Left ventricle myocardium inferior (tissue), 1 donor: ENCODE measurements at regions of chr15 and their contacts with region 1.

Region 1: DNA sequence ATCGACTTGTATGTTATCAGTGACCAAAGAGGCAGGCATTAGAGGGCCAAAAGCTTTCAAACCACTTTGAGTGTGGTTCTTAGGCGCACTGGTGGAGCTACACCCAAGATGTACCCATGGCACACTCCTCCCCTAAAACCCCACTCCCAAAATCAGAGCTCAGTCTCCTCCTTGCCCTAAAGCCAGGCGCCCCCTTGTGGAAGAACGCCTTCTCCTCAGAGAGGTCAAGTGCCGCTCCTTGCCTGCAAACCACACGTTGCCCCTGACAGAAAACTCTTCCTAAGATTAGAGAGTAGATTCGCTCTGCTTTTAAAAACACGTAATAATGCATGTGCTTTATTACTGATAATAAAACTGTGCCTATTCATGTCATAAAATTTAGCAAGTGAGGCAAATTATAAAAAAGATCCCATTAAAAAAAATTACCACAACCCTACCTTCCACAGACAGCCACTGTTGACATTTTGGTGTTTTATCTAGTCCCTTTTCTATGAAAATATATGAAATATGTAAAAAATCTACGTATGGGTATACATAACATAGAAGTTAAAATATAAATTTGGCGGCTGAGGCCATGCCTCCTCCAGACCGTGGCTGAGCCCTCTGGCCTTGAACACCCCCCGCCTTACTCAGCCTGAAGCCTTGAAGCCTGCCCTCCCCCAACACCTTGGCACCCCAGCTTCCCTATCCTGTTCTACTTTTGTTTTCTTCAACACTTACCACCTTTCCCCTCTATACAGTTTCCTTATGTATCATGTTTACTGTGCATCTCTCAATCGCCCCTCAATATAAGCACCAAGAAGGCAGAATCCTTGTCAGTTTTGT is 33.5 kb downstream of the BCL2L10 start:
- DNase-seq: peak; percentile 81
- H3K4me3 ChIP-seq: no peak overlapping the region
- H3K27ac ChIP-seq: no peak overlapping the region
- H3K4me1 ChIP-seq: peaks cover 6% of the 10 kb centered on the region
- H3K27me3 ChIP-seq: no peaks in the 10 kb centered on the region
- CTCF ChIP-seq: peak; percentile 91

Region 2: GRCh38 chr15:51697163-51697562 is 381.9 kb before region 1 on chr15:
- intact Hi-C with region 1: no loop called
- DNase-seq: no peak
- H3K4me3 ChIP-seq: no peak overlapping the region
- H3K27ac ChIP-seq: no peak overlapping the region
- H3K4me1 ChIP-seq: no peaks in the 10 kb centered on the region
- H3K27me3 ChIP-seq: no peaks in the 10 kb centered on the region
- CTCF ChIP-seq: no peak

Region 3: GRCh38 chr15:51793521-51794305 is 285.4 kb before region 1 on chr15:
- intact Hi-C with region 1: no loop called
- DNase-seq: peak; percentile 44
- H3K4me3 ChIP-seq: no peak overlapping the region
- H3K27ac ChIP-seq: peak overlapping the region; percentile 47
- H3K4me1 ChIP-seq: peaks cover 19% of the 10 kb centered on the region
- H3K27me3 ChIP-seq: no peaks in the 10 kb centered on the region
- CTCF ChIP-seq: no peak

Region 4: DNA sequence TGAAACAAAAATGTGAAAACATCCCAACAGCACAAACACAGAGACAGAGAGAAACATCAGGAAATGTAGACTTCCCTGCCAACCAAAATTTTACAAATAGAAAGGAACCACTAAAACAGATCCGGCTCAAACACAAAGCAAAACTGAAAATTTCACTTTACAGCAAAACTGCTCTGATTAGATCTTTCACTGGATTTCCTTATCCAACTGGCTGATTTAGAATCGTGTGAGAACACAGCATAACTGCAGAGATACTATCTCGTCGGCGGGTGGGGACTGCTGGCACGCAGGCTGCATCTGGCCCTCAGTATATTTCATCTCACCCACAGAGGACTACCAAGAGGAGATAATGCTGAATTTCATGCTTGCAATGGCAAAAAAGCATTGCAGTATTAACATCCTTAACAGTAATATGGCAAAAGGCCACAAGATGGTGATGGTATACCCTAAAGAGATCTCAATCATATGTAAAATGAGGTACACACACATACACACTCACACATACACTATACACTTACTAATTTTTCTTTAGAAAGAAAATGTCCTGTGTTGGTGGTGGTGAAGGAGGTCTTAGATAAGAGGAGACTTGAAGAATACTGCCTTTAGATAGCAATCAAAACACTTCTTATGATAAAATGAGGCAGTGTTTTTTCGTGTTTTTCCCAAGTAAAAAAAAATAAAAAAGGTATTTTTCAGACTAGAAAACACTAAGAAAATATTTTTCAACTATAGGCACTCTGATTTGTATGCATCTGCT is 96.9 kb before region 1 on chr15:
- intact Hi-C with region 1: loop called (anchors 5 kb)
- DNase-seq: no peak
- H3K4me3 ChIP-seq: peak overlapping the region; percentile 51
- H3K27ac ChIP-seq: peak overlapping the region; percentile 78
- H3K4me1 ChIP-seq: peaks cover 25% of the 10 kb centered on the region
- H3K27me3 ChIP-seq: no peaks in the 10 kb centered on the region
- CTCF ChIP-seq: peak; percentile 58

Region 5: GRCh38 chr15:52308446-52309153 is 229.5 kb after region 1 on chr15:
- intact Hi-C with region 1: loop called (anchors 10 kb)
- DNase-seq: no peak
- H3K4me3 ChIP-seq: no peak overlapping the region
- H3K27ac ChIP-seq: no peak overlapping the region
- H3K4me1 ChIP-seq: peaks cover 12% of the 10 kb centered on the region
- H3K27me3 ChIP-seq: no peaks in the 10 kb centered on the region
- CTCF ChIP-seq: no peak